ENCODE measurements at regions of chr12 and their contacts with region 1.

Region 1: DNA sequence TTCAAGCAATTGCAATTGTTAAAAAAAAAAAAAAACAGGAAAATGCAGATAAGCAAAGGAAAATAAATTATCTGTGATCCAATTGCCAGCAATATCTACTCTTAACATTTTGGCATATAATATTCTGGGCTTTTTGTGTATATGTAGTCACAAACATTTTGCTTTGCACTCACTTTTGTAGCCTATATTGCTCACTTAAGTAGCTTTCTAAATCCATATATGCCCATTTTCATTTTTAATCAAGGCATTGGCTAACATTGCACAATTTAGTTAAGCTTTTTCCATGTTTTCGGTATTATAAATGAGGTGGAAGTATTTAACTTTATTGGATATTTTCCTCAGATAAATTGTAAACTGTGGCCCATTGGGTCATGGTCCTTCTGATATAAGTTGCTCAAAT is 466.3 kb upstream of the ATP2B1 start:
- DNase-seq: no peak
- H3K4me3 ChIP-seq: no peak overlapping the region
- H3K27ac ChIP-seq: no peak overlapping the region
- H3K4me1 ChIP-seq: peaks cover 0 to 1% (median 0%) of the 10 kb centered on the region in 4 donors
- H3K27me3 ChIP-seq: no peaks in the 10 kb centered on the region
- CTCF ChIP-seq: no peak

Region 2: DNA sequence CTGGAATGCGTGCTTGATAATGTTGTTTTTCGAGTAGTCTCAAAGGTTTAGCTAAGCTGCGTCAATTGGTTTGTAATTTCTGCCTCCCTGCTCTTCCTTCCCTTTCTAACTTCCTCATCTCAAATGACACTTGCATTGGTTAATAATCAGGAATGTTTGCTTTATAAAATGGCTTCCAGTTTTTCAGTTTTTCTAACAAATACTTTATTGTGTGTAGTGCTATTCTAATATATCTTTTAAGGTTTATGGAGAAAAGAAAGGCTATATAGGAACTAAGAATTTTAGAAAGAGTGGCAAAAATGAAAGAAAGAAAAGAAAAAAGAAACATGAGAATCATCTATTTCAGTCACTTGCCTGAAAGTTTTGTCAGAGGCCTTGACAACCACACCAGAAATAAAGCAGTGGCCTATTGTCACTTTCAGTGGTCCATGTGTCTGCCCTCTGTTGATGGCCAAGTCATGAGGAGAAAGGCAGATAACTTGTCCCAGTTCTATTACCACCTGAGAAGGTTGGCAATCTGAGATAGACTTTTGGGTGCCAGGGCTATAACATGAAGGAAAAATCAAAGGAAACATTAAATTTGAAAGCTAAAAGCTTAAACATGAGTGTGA is 1372.8 kb before region 1 on chr12:
- intact Hi-C with region 1: loop called (anchors 5 kb)
- DNase-seq: no peak
- H3K4me3 ChIP-seq: no peak overlapping the region
- H3K27ac ChIP-seq: no peak overlapping the region
- H3K4me1 ChIP-seq: no peaks in the 10 kb centered on the region
- H3K27me3 ChIP-seq: no peaks in the 10 kb centered on the region
- CTCF ChIP-seq: no peak